ENCODE measurements at regions of chr2 and their contacts with region 1.

Region 1: DNA sequence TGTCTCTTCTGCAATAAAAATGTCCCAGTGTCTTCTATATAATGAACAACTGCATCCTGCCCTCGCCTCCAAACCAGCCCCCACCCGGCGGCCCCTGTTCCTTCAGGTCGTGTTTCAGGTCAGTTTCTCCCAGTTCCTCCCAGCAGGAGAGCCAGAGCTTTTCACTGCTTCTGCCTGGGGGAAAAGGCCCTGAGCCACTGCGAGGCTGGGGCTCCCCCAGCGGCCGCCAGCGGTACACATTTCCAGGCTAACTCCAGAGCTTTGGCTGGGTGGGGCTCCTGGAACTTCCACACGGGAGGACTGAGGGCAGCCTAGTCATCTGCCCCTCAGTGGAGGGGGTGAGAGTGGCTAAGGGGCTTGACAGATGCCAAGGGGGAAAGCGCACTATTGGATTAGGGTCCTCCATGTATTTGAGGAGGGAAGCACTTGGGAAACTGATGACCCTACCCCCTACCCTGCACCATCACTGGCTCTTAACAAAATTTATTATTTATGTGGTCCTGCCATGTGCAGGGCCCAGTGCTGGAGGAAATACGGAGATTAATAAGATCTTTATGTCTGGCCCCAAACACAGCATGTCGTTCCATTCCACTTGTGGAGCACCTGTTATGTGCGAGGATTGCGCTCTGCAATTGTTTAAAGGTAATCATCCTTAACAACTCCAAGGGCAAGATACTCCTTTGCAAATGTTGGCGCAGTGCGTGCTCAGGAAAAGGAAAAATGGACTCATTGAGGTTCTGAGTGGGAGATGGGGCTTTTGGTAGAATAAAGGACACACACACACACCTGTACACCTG is 17.3 kb upstream of the CYS1 start:
- DNase-seq: peak; percentile 61 to 86 (median 68)
- ATAC-seq: peak; percentile 79 to 97 (median 93)
- H3K4me3 ChIP-seq: no peak overlapping the region
- H3K27ac ChIP-seq: no peak overlapping the region
- H3K4me1 ChIP-seq: peaks cover 0 to 15% (median 2%) of the 10 kb centered on the region in 12 donors
- H3K27me3 ChIP-seq: peaks cover 0 to 19% (median 5%) of the 10 kb centered on the region in 9 donors
- CTCF ChIP-seq: peak; percentile 71 to 96 (median 90)
- POLR2A ChIP-seq: no peak

Region 2: GRCh38 chr2:9799665-9800632 is 297.6 kb before region 1 on chr2:
- intact Hi-C with region 1: loop called in 1 of 10 experiments (anchors 10 kb)
- DNase-seq: peak; percentile 84 to 94 (median 88)
- ATAC-seq: peak; percentile 78 to 89 (median 80)
- H3K4me3 ChIP-seq: peak overlapping the region in 1 of 12 donors; percentile 12
- H3K27ac ChIP-seq: peak overlapping the region in 7 of 12 donors; percentile 18 to 67 (median 33)
- H3K4me1 ChIP-seq: peaks cover 0 to 52% (median 24%) of the 10 kb centered on the region in 12 donors
- H3K27me3 ChIP-seq: no peaks in the 10 kb centered on the region
- CTCF ChIP-seq: peak; percentile 92 to 99 (median 98)
- POLR2A ChIP-seq: no peak

Region 3: DNA sequence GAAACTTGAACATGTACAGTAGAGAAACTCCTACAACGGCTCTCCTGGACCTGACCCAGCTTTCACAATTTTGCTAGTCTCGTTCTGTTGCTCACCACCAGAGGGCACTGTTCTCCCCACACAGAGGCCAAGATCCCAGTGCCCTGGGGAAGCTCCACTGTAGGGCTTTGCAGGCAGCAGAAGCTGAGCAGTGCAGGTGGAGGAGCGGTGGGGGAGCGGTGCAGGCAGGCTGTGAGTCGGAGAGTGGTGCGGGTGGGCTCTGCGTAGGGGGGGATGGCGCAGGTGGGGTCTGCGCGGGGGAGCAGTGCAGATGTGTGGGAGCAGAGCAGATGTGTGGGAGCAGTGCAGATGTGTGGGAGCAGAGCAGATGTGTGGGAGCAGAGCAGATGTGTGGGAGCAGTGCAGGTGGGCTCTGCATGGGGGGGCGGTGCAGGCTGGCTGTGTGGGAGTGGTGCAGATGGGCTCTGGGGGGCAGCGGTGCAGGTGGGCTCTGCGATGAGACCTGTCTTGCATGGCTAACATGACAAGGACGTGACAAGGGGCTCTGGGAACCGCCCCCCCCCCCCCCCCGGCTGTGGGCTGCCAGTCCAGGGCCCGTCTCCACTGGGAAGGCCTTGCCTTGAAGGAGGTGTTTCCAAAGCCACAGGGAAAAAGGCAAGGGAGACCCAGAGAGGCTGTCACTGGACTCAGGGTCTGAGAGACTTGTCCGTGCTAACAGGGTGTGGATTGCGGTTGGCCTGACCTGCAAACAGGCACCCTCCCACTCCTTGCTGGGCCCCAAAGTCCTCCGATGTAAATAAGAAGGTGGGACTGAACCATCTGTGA is 24.7 kb before region 1 on chr2:
- intact Hi-C with region 1: loop called in 4 of 10 experiments (anchors 1 to 2 kb)
- DNase-seq: peak in 4 of 5 donors; percentile 79 to 88 (median 82)
- ATAC-seq: peak; percentile 76 to 94 (median 92)
- H3K4me3 ChIP-seq: no peak overlapping the region
- H3K27ac ChIP-seq: no peak overlapping the region
- H3K4me1 ChIP-seq: peaks cover 0 to 8% (median 0%) of the 10 kb centered on the region in 12 donors
- H3K27me3 ChIP-seq: peaks cover 0 to 24% (median 0%) of the 10 kb centered on the region in 9 donors
- CTCF ChIP-seq: peak; percentile 78 to 88 (median 83)
- POLR2A ChIP-seq: no peak

Region 4: DNA sequence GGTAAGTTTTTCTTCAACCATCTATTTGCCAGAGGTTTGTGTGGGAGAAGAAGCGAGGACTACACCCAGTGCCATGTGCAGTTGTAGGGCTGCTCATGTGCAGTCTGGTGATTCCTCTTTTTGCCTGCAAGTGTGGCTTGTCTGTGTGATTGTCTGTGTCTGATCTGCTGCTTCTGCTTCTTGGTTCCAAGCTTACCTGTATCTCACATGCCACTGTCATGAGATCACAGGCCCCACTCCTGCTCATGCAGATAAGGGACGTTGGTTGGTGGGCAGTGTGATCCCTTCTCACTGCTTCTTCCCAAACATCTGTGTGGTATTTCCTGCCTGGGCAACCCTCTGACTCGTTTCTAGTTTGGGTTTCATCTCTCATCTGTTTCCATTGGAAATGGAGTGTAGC is 52.1 kb after region 1 on chr2:
- intact Hi-C with region 1: no loop called
- DNase-seq: peak in 1 of 5 donors; percentile 15
- ATAC-seq: no peak
- H3K4me3 ChIP-seq: no peak overlapping the region
- H3K27ac ChIP-seq: no peak overlapping the region
- H3K4me1 ChIP-seq: peaks cover 0 to 15% (median 9%) of the 10 kb centered on the region in 12 donors
- H3K27me3 ChIP-seq: no peaks in the 10 kb centered on the region
- CTCF ChIP-seq: no peak
- POLR2A ChIP-seq: no peak

Measured in heart left ventricle (tissue), 16 donors.